ENCODE measurements at regions of chr17 and their contacts with region 1.

Region 1: DNA sequence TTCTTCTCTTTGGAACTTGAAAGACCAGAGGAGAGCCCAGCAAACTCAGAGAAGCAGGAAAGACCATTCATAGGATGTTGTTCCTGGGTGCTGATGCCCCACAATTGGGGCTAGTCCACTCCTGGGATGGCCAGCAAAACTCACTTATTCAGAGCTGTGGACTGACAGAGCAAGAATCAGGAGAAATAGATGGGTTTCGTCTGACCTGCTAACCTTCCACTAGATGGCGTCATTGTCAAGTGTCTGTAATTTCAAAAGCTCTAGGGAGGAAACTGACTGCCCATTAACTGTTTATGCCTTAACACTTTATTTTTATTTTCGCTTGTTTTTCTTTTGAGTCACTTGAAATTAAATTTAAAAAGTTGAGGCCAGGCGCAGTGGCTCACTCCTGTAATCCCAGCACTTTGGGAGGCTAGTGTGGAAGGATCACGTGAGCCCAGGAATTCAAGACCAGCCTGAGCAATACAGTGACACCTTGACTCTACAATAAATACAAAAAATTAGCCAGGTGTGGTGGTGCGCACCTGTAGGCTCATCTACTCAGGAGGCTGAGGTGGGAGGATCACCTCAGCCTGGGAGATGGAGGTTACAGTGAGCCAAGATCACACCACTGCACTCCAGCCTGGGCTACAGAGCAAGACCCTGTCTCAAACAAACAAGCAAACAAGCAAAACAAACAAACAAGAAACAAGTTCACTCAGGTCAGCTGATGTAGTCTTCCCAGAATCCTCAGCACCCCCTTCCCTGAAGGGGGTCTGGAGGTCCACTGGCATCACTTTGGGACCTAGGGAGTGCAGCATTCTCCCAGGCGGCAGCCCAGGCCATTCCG is 28.6 kb upstream of the MILR1 start:
- DNase-seq: no peak
- H3K4me3 ChIP-seq: no peak overlapping the region
- H3K27ac ChIP-seq: no peak overlapping the region
- H3K4me1 ChIP-seq: peaks cover 0 to 12% (median 3%) of the 10 kb centered on the region in 4 donors
- H3K27me3 ChIP-seq: no peaks in the 10 kb centered on the region
- CTCF ChIP-seq: peak; percentile 40 to 64 (median 48)
- EP300 ChIP-seq: no peak
- POLR2A ChIP-seq: no peak

Region 2: GRCh38 chr17:64320613-64321553 is 99.5 kb before region 1 on chr17:
- intact Hi-C with region 1: loop called (anchors 5 kb)
- DNase-seq: peak; percentile 86
- H3K4me3 ChIP-seq: peak overlapping the region in 1 of 4 donors; percentile 22
- H3K27ac ChIP-seq: peak overlapping the region in 1 of 4 donors; percentile 15
- H3K4me1 ChIP-seq: peaks cover 0 to 3% (median 0%) of the 10 kb centered on the region in 4 donors
- H3K27me3 ChIP-seq: peaks cover 0 to 8% (median 0%) of the 10 kb centered on the region in 3 donors
- CTCF ChIP-seq: peak; percentile 31 to 61 (median 57)
- EP300 ChIP-seq: no peak
- POLR2A ChIP-seq: peak in 1 of 2 donors; percentile 19

Region 3: DNA sequence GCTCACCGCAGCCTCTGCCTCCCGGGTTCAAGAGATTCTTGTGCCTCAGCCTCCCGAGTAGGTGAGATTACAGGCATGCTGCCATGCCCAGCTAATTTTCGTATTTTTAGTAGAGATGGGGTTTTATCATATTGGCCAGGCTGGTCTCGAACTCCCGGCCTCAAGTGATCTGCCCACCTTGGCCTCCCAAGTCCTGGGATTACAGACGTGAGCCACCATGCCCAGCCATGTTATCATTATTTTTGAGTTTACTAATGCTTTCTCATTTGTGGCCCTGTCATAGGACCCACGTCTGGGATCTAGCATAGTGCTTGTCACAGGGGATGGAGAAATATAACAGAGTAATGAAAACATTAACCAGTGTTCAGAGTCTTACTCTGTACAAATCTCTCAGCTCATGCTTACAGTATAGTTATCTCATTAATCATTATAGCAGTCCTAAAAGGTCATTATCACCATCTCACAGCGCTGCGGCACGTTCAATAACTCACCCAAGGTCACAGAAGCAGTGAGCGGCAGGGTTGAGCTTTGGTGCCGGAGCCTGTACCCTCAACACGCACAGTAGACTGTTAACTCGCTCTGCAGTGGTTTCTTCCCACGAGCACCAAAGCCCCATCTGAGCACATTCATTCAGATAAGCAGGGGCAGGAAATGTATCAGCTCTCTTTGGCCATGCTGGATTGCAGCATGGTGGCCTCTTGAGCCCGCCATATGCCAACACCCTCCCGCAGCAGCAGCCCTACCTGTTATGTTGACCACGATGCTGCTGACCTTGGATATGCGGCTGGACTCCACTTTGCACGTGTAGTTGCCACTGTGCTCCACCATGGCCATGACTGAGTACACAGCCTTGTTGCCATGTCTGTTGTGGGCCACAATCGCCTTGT is 51.1 kb before region 1 on chr17:
- intact Hi-C with region 1: no loop called
- DNase-seq: peak; percentile 38
- H3K4me3 ChIP-seq: no peak overlapping the region
- H3K27ac ChIP-seq: no peak overlapping the region
- H3K4me1 ChIP-seq: no peaks in the 10 kb centered on the region
- H3K27me3 ChIP-seq: no peaks in the 10 kb centered on the region
- CTCF ChIP-seq: no peak
- EP300 ChIP-seq: no peak
- POLR2A ChIP-seq: no peak

Region 4: DNA sequence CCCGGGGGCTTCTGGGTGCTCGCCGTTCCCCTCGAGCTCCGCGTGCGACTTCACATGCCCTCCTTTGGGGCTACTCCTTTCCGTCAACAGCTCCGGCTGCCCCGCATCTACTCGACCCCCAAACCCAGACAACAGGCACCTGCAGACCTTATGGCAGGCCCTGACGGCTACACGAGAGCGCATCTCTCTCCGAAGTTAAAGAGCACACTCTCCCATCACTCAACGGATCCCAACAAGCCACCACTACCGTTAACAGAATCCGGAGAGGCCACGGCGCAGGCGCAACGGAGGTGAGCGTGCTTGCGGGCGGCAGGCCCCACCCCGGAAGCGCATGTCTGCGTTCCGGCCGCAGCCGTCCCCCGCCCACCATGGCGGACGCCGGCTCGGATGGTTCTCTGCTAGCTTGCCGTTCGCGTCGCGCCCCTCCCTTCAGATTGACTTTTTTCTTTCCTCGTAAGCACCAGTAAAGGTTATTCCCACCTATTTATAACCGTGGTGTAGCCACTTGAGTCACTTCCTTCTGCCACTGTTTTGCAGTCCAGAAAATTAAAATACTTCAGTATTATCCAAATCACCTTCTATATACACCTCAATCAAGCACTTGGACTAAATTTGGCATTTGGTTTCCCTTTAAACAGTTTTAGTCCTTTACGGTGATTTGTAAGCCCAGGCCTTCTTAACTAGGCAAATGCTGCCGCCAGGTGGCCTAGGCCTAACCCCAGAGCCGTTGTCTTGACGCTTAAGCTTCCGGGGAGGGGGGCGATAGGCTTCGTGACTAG is 76.6 kb after region 1 on chr17 and contains the start of gene POLG2:
- intact Hi-C with region 1: no loop called
- DNase-seq: peak; percentile 95
- H3K4me3 ChIP-seq: peak within 1 kb of the TSS; percentile 56 to 76 (median 69)
- H3K27ac ChIP-seq: peak within 1 kb of the TSS; percentile 76 to 87 (median 82)
- H3K4me1 ChIP-seq: peaks cover 0 to 71% (median 46%) of the 10 kb centered on the region in 4 donors
- H3K27me3 ChIP-seq: no peaks in the 10 kb centered on the region
- CTCF ChIP-seq: peak in 3 of 4 experiments; percentile 42 to 53 (median 49)
- EP300 ChIP-seq: peak in 1 of 4 donors; percentile 4
- POLR2A ChIP-seq: no peak
- total RNA-seq, gene POLG2: 5.2 to 16.1 (median 10.4) TPM

Region 5: DNA sequence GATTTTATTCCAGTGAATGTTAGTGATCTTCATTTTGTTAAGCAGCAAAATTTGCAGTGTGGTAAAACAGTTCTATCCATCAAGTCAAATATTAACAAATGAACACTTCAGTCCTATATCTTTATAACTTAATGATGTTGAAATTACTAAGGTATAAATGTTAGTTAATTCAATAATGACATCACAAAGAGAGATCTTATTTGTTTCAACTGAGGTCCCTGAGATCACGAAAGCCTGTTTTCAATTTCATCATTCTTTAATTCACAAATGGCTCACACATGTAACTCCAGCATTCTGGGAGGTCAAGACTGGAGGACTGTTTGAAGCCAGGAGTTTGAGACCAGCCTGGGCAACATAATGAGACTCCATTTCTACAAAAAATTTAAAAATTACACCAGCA is 227.9 kb after region 1 on chr17:
- intact Hi-C with region 1: loop called (anchors 10 kb)
- DNase-seq: no peak
- H3K4me3 ChIP-seq: no peak overlapping the region
- H3K27ac ChIP-seq: no peak overlapping the region
- H3K4me1 ChIP-seq: peaks cover 0 to 13% (median 7%) of the 10 kb centered on the region in 4 donors
- H3K27me3 ChIP-seq: no peaks in the 10 kb centered on the region
- CTCF ChIP-seq: no peak
- EP300 ChIP-seq: no peak
- POLR2A ChIP-seq: no peak